ENCODE measurements at regions of chr22 and their contacts with region 1.

Region 1: DNA sequence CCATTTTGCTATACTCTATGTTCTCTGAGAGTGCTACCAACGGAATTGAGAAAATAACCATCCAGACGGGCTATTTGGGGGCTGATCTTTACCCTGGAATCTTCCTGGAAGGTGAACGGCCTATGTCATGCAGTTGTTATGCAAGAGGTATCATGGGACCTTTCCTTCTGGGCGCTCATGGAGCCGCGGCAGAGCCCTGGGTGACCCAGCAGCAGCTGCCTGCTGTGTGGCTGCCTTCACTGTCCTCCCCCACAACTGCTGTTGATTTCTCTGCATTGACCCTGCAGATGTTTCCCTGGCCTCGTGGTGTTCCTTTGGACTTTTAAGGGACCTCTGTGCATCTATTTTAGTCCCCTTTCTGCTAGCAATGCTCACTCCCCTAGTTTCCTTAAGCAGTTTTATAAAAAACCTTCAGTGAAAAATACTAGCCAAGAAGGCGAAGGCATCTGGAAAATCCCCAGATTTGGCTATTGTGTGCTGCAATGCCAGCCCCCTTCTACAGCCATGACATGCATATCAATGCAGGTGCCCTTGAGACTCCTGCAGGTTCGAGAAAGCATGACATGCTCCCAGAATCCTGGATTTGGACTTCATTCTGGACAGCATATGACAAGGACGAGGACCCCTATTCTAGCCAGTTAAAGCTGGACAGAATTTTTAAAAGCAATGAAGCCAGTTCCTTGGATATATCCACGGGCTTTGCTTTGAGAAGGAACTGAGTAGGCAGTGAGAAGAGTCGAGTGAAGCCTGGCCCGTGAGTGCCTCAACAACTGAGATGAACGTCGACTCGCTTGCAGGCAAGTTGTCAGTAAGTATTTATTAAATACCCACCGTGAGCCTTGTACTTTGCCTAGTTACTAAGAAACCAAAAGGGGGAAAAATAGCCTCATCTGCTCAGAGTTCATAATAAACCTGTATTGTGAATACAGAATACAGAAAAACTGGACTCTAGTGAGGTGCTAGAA is at the start of gene SLC25A18:
- DNase-seq: no peak
- H3K4me3 ChIP-seq: no peak within 1 kb of the TSS
- H3K27ac ChIP-seq: no peak within 1 kb of the TSS
- H3K4me1 ChIP-seq: no peaks in the 10 kb centered on the region
- H3K27me3 ChIP-seq: peaks cover 2% of the 10 kb centered on the region
- CTCF ChIP-seq: no peak
- total RNA-seq, gene SLC25A18: 0.33 TPM in 1 of 2 donors, not detected in the other

Region 2: GRCh38 chr22:17486313-17486712 is 76.9 kb before region 1 on chr22:
- CTCF ChIA-PET with region 1: no interaction called
- dilution Hi-C with region 1: no loop called
- in situ Hi-C with region 1: no loop called
- intact Hi-C with region 1: no loop called
- DNase-seq: no peak
- H3K4me3 ChIP-seq: no peak overlapping the region
- H3K27ac ChIP-seq: no peak overlapping the region
- H3K4me1 ChIP-seq: no peaks in the 10 kb centered on the region
- H3K27me3 ChIP-seq: no peaks in the 10 kb centered on the region
- CTCF ChIP-seq: no peak

Region 3: DNA sequence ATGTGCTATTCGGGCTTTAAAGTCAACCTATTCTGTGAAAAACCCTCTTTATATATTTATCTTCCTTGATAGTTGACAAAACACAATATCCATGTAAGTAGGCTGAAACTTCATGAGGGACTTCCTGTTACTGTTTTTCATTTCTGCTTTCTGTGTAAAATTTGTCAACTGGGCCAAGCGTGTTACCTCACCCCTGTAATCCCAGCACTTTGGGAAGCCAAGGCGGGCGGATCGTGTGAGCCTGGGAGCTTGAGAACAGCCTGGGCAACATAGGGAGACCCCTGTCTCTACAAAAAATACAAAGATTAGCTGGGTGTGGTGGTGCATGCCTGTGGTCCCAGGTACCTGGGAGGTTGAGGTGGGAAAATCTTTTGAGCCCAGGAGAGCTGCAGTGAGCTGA is 66.3 kb before region 1 on chr22:
- CTCF ChIA-PET with region 1: no interaction called
- dilution Hi-C with region 1: no loop called
- in situ Hi-C with region 1: no loop called
- intact Hi-C with region 1: no loop called
- DNase-seq: no peak
- H3K4me3 ChIP-seq: no peak overlapping the region
- H3K27ac ChIP-seq: no peak overlapping the region
- H3K4me1 ChIP-seq: no peaks in the 10 kb centered on the region
- H3K27me3 ChIP-seq: no peaks in the 10 kb centered on the region
- CTCF ChIP-seq: no peak

Region 4: GRCh38 chr22:17684245-17684644 is 121.1 kb after region 1 on chr22:
- CTCF ChIA-PET with region 1: no interaction called
- dilution Hi-C with region 1: no loop called
- in situ Hi-C with region 1: no loop called
- intact Hi-C with region 1: no loop called
- DNase-seq: no peak
- H3K4me3 ChIP-seq: no peak overlapping the region
- H3K27ac ChIP-seq: no peak overlapping the region
- H3K4me1 ChIP-seq: no peaks in the 10 kb centered on the region
- H3K27me3 ChIP-seq: no peaks in the 10 kb centered on the region
- CTCF ChIP-seq: no peak

Region 5: DNA sequence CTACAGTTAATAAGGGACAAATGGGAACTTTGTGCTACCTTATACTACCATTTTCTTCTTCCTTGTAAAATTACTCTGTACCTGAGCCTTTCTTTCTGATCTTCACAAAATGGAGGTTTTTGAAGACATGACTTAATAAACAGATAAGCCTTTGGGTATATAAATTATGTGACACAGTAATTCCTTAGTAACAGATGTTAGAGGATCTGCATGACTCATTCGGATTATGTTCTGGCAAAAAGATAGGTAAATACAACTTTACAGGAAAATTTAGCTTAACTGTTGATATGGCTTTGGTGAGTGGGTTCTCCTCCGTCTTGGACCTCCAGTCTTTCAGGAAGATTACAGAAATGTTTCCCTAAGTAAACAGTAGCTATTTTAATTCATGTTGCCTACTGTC is 149.3 kb after region 1 on chr22:
- CTCF ChIA-PET with region 1: no interaction called
- dilution Hi-C with region 1: no loop called
- in situ Hi-C with region 1: loop called in 1 of 2 experiments (anchors 10 kb)
- intact Hi-C with region 1: loop called (anchors 5 kb)
- DNase-seq: no peak
- H3K4me3 ChIP-seq: no peak overlapping the region
- H3K27ac ChIP-seq: no peak overlapping the region
- H3K4me1 ChIP-seq: peaks cover 11% of the 10 kb centered on the region
- H3K27me3 ChIP-seq: no peaks in the 10 kb centered on the region
- CTCF ChIP-seq: no peak

Region 6: DNA sequence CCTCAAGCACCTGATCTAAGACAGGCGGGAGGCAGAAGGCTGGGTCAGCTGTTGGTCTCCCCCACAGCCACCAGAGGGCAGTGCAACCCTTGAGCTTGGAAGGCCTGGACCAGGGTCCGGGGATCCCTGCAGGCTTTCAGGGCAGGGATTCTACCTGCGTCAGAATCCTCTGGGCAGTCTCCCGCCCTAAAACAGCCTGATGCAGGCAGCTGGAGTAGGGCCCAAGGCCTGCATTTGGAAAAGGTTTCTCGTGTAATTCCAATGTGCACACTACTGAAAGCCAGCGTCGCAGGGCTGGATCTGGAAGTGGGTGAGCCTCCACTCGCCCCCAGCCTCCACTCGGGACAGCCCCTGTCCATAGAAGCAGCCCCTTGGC is 179.3 kb after region 1 on chr22:
- CTCF ChIA-PET with region 1: interaction called, 6 read pairs
- dilution Hi-C with region 1: no loop called
- in situ Hi-C with region 1: loop called in 1 of 2 experiments (anchors 25 kb)
- intact Hi-C with region 1: loop called (anchors 1 kb)
- DNase-seq: peak; percentile 51
- H3K4me3 ChIP-seq: no peak overlapping the region
- H3K27ac ChIP-seq: no peak overlapping the region
- H3K4me1 ChIP-seq: peaks cover 12% of the 10 kb centered on the region
- H3K27me3 ChIP-seq: no peaks in the 10 kb centered on the region
- CTCF ChIP-seq: peak; percentile 81 to 89

Region 7: GRCh38 chr22:17802822-17803221 is 239.6 kb after region 1 on chr22:
- CTCF ChIA-PET with region 1: interaction called, 14 read pairs
- dilution Hi-C with region 1: no loop called
- in situ Hi-C with region 1: no loop called
- intact Hi-C with region 1: no loop called
- DNase-seq: no peak
- H3K4me3 ChIP-seq: no peak overlapping the region
- H3K27ac ChIP-seq: no peak overlapping the region
- H3K4me1 ChIP-seq: peaks cover 16% of the 10 kb centered on the region
- H3K27me3 ChIP-seq: no peaks in the 10 kb centered on the region
- CTCF ChIP-seq: no peak

Measured in mammary epithelial cell (primary cell).